ENCODE measurements at regions of chr6 and their contacts with region 1.

Region 1: GRCh38 chr6:15776458-15776980 is 113.7 kb upstream of the DTNBP1 start:
- DNase-seq: peak; percentile 55
- ATAC-seq: peak; percentile 89
- H3K4me3 ChIP-seq: no peak overlapping the region
- H3K27ac ChIP-seq: no peak overlapping the region
- H3K4me1 ChIP-seq: peaks cover 7% of the 10 kb centered on the region
- H3K27me3 ChIP-seq: no peaks in the 10 kb centered on the region
- CTCF ChIP-seq: no peak
- EP300 ChIP-seq: peak; percentile 85 to 89; a peak in 2 of 4 replicates
- POLR2A ChIP-seq: no peak
- RAD21 ChIP-seq: 0 out of 2 replicates have a peak, but pooled peaks have one; percentile 16

Region 2: DNA sequence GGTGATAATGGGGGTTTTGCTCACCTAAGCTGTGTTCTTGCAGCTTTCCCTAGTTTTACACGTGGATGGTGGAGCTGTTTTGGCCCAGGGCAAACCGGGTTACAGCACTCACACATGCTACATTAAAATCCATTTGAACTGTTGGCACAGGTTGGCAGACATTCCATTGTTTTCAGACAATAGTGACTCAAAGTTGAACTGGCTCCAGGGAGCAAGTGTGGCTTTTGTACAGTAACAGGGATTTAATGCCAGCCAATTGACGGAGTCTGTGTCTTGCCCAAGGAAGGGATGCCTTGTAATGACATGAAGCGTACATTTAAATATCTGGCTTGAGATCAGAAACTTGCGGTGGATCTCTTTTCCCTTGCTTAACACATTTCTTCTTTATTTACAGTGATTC is 296.8 kb before region 1 on chr6:
- CTCF ChIA-PET with region 1: no interaction called
- POLR2A ChIA-PET with region 1: no interaction called
- RAD21 ChIA-PET with region 1: no interaction called
- SMC1A ChIA-PET with region 1: no interaction called
- in situ Hi-C with region 1: no loop called
- intact Hi-C with region 1: no loop called
- DNase-seq: no peak
- ATAC-seq: no peak
- H3K4me3 ChIP-seq: no peak overlapping the region
- H3K27ac ChIP-seq: no peak overlapping the region
- H3K4me1 ChIP-seq: no peaks in the 10 kb centered on the region
- H3K27me3 ChIP-seq: no peaks in the 10 kb centered on the region
- CTCF ChIP-seq: no peak
- EP300 ChIP-seq: no peak
- POLR2A ChIP-seq: no peak
- RAD21 ChIP-seq: no peak

Region 3: GRCh38 chr6:15730442-15730841 is 46.1 kb before region 1 on chr6:
- CTCF ChIA-PET with region 1: interaction called, 6 read pairs
- POLR2A ChIA-PET with region 1: interaction called, 7 read pairs
- RAD21 ChIA-PET with region 1: interaction called, 18 read pairs
- SMC1A ChIA-PET with region 1: interaction called, 39 read pairs
- in situ Hi-C with region 1: no loop called
- intact Hi-C with region 1: no loop called
- DNase-seq: no peak
- ATAC-seq: no peak
- H3K4me3 ChIP-seq: no peak overlapping the region
- H3K27ac ChIP-seq: no peak overlapping the region
- H3K4me1 ChIP-seq: no peaks in the 10 kb centered on the region
- H3K27me3 ChIP-seq: no peaks in the 10 kb centered on the region
- CTCF ChIP-seq: no peak
- EP300 ChIP-seq: no peak
- POLR2A ChIP-seq: no peak
- RAD21 ChIP-seq: no peak

Region 4: GRCh38 chr6:15793288-15793687 is 16.8 kb after region 1 on chr6:
- CTCF ChIA-PET with region 1: interaction called, 19 read pairs
- POLR2A ChIA-PET with region 1: interaction called, 7 read pairs
- RAD21 ChIA-PET with region 1: interaction called, 4 read pairs
- SMC1A ChIA-PET with region 1: interaction called, 13 read pairs
- in situ Hi-C with region 1: no loop called
- intact Hi-C with region 1: no loop called
- DNase-seq: no peak
- ATAC-seq: no peak
- H3K4me3 ChIP-seq: no peak overlapping the region
- H3K27ac ChIP-seq: no peak overlapping the region
- H3K4me1 ChIP-seq: no peaks in the 10 kb centered on the region
- H3K27me3 ChIP-seq: no peaks in the 10 kb centered on the region
- CTCF ChIP-seq: no peak
- EP300 ChIP-seq: no peak
- POLR2A ChIP-seq: no peak
- RAD21 ChIP-seq: no peak

Region 5: GRCh38 chr6:15841937-15842705 is 65.6 kb after region 1 on chr6:
- CTCF ChIA-PET with region 1: interaction called, 8 read pairs
- POLR2A ChIA-PET with region 1: no interaction called
- RAD21 ChIA-PET with region 1: interaction called, 5 read pairs
- SMC1A ChIA-PET with region 1: interaction called, 13 read pairs
- in situ Hi-C with region 1: no loop called
- intact Hi-C with region 1: no loop called
- DNase-seq: no peak
- ATAC-seq: no peak
- H3K4me3 ChIP-seq: no peak overlapping the region
- H3K27ac ChIP-seq: no peak overlapping the region
- H3K4me1 ChIP-seq: peaks cover 5% of the 10 kb centered on the region; the same call in 1 of the 2 replicates
- H3K27me3 ChIP-seq: no peaks in the 10 kb centered on the region
- CTCF ChIP-seq: no peak
- EP300 ChIP-seq: no peak
- POLR2A ChIP-seq: no peak
- RAD21 ChIP-seq: no peak

Region 6: GRCh38 chr6:15879382-15880261 is 103.1 kb after region 1 on chr6:
- CTCF ChIA-PET with region 1: interaction called, 10 read pairs
- POLR2A ChIA-PET with region 1: interaction called, 15 read pairs
- RAD21 ChIA-PET with region 1: interaction called, 55 read pairs
- SMC1A ChIA-PET with region 1: interaction called, 36 read pairs
- in situ Hi-C with region 1: no loop called
- intact Hi-C with region 1: loop called (anchors 5 kb)
- DNase-seq: no peak
- ATAC-seq: peak; percentile 81
- H3K4me3 ChIP-seq: no peak overlapping the region
- H3K27ac ChIP-seq: peak overlapping the region; percentile 61
- H3K4me1 ChIP-seq: peaks cover 18% of the 10 kb centered on the region
- H3K27me3 ChIP-seq: no peaks in the 10 kb centered on the region
- CTCF ChIP-seq: no peak
- EP300 ChIP-seq: 0 out of 4 replicates have a peak, but pooled peaks of 1 of the 2 experiments have one; percentile 25
- POLR2A ChIP-seq: no peak
- RAD21 ChIP-seq: no peak

Region 7: GRCh38 chr6:15893556-15894268 is 117.2 kb after region 1 on chr6:
- CTCF ChIA-PET with region 1: interaction called, 3 read pairs
- POLR2A ChIA-PET with region 1: interaction called, 5 read pairs
- RAD21 ChIA-PET with region 1: interaction called, 130 read pairs
- SMC1A ChIA-PET with region 1: interaction called, 198 read pairs
- in situ Hi-C with region 1: no loop called
- intact Hi-C with region 1: no loop called
- DNase-seq: no peak
- ATAC-seq: 0 out of 3 replicates have a peak, but pooled peaks have one; percentile 22
- H3K4me3 ChIP-seq: no peak overlapping the region
- H3K27ac ChIP-seq: no peak overlapping the region
- H3K4me1 ChIP-seq: peaks cover 14% of the 10 kb centered on the region
- H3K27me3 ChIP-seq: no peaks in the 10 kb centered on the region
- CTCF ChIP-seq: peak in 2 of 3 experiments; percentile 37 to 59; a peak in 3 of 6 replicates
- EP300 ChIP-seq: no peak
- POLR2A ChIP-seq: no peak
- RAD21 ChIP-seq: peak; percentile 41

Measured in GM12878 (cell line).